ENCODE measurements at regions of chr1 and their contacts with region 1.

Region 1: GRCh38 chr1:76330991-76331603 is 256.6 kb downstream of the ST6GALNAC3 start:
- DNase-seq: peak in 1 of 2 experiments; percentile 50
- H3K4me3 ChIP-seq: no peak overlapping the region
- H3K4me3 Mint-ChIP-seq: no peak overlapping the region
- H3K27ac Mint-ChIP-seq: no peak overlapping the region
- H3K4me1 ChIP-seq: no peaks in the 10 kb centered on the region
- H3K4me1 Mint-ChIP-seq: no peaks in the 10 kb centered on the region
- H3K27me3 ChIP-seq: no peaks in the 10 kb centered on the region
- H3K27me3 Mint-ChIP-seq: no peaks in the 10 kb centered on the region
- CTCF ChIP-seq: peak; percentile 72 to 77

Region 2: DNA sequence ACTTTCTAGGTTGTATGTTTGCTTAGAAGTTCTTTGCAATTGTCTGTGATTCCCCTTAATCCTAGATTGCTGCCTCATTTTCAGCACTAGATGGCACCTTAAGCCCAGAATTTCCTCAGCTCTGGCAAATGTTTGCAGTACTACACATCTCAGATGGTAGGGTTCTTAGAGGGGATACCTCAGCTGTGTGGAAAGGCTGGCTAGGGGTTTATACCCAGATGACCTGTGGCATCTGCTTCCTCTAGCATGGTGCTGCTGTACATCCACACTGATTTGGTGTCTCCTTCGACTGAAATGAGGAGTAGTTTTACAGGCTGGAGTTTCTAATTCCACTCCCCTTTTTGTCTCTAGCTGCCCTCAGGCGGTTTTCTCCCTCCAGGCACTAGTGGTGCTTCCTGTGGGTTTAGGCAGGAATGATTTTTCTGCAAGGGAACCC is 422.4 kb before region 1 on chr1:
- CTCF ChIA-PET with region 1: no interaction called
- POLR2A ChIA-PET with region 1: no interaction called
- intact Hi-C with region 1: loop called (anchors 5 kb)
- DNase-seq: peak; percentile 42 to 53
- H3K4me3 ChIP-seq: no peak overlapping the region
- H3K4me3 Mint-ChIP-seq: no peak overlapping the region
- H3K27ac Mint-ChIP-seq: no peak overlapping the region
- H3K4me1 ChIP-seq: no peaks in the 10 kb centered on the region
- H3K4me1 Mint-ChIP-seq: peaks cover 16% of the 10 kb centered on the region
- H3K27me3 ChIP-seq: no peaks in the 10 kb centered on the region
- H3K27me3 Mint-ChIP-seq: no peaks in the 10 kb centered on the region
- CTCF ChIP-seq: peak; percentile 37 to 46

Region 3: DNA sequence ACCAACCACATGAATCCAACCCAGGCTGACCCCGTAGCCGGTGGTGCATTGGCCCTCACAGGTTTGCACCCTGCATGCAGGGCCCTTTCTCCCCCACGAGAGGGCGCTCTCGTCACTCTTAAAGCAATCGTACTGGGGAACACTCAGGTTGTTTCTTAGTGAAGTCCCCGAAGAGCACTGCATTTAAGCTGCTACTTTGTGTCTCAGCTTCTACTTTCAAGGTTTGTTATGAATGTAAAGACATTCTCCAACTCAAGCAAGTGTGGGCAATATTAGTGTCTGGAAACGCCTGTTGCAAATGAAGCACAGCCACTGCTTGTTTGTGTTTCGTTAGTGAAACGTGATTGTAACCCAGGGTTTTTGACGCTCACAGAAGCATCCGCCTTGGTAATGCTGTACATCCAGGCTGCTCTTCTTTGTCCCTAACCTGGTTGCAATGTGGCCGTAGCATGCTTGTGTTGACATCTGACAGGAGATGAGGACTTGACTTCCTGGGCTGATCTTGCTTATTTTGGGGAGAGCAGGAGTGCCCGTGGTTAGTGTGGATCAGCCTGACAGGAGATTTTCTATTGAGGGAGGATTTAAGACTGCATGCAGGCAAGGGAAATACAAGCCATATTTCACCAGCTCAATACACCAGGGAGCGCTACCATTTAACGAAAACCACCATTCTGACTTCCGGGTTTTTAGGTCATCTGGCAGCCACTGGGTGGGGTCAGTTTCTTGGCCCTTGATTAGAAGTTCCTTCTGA is 176.7 kb before region 1 on chr1:
- CTCF ChIA-PET with region 1: no interaction called
- POLR2A ChIA-PET with region 1: no interaction called
- intact Hi-C with region 1: loop called (anchors 10 kb)
- DNase-seq: peak; percentile 41 to 60
- H3K4me3 ChIP-seq: no peak overlapping the region
- H3K4me3 Mint-ChIP-seq: no peak overlapping the region
- H3K27ac Mint-ChIP-seq: no peak overlapping the region
- H3K4me1 ChIP-seq: no peaks in the 10 kb centered on the region
- H3K4me1 Mint-ChIP-seq: no peaks in the 10 kb centered on the region
- H3K27me3 ChIP-seq: no peaks in the 10 kb centered on the region
- H3K27me3 Mint-ChIP-seq: no peaks in the 10 kb centered on the region
- CTCF ChIP-seq: peak; percentile 73 to 81

Region 4: DNA sequence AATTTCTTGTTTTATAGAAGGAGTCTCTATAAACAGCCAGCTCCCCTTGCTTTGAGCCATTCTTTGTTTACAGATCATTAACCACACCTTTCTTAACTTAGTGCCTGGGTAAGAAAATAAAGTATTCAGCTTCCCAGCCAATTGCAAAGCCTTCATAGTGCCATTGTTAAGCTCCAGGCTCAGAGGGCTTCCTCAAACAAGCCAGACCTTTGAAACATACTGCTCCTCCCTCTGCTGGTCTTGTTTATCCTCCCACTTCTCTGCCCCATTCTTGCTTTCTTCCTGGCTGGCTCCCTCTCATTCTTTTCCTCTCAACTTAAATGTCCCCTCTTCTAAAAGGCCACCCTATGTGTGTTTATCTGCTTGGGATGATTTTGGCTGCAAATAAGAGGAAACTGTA is 216.8 kb after region 1 on chr1:
- CTCF ChIA-PET with region 1: no interaction called
- POLR2A ChIA-PET with region 1: no interaction called
- intact Hi-C with region 1: loop called (anchors 5 kb)
- DNase-seq: peak; percentile 27 to 45
- H3K4me3 ChIP-seq: no peak overlapping the region
- H3K4me3 Mint-ChIP-seq: no peak overlapping the region
- H3K27ac Mint-ChIP-seq: no peak overlapping the region
- H3K4me1 ChIP-seq: no peaks in the 10 kb centered on the region
- H3K4me1 Mint-ChIP-seq: peaks cover 6% of the 10 kb centered on the region
- H3K27me3 ChIP-seq: no peaks in the 10 kb centered on the region
- H3K27me3 Mint-ChIP-seq: no peaks in the 10 kb centered on the region
- CTCF ChIP-seq: no peak

Region 5: GRCh38 chr1:76705560-76705959 is 374.5 kb after region 1 on chr1:
- CTCF ChIA-PET with region 1: no interaction called
- POLR2A ChIA-PET with region 1: no interaction called
- intact Hi-C with region 1: no loop called
- DNase-seq: no peak
- H3K4me3 ChIP-seq: no peak overlapping the region
- H3K4me3 Mint-ChIP-seq: no peak overlapping the region
- H3K27ac Mint-ChIP-seq: no peak overlapping the region
- H3K4me1 ChIP-seq: no peaks in the 10 kb centered on the region
- H3K4me1 Mint-ChIP-seq: no peaks in the 10 kb centered on the region
- H3K27me3 ChIP-seq: no peaks in the 10 kb centered on the region
- H3K27me3 Mint-ChIP-seq: peaks cover 4% of the 10 kb centered on the region
- CTCF ChIP-seq: no peak

Region 6: DNA sequence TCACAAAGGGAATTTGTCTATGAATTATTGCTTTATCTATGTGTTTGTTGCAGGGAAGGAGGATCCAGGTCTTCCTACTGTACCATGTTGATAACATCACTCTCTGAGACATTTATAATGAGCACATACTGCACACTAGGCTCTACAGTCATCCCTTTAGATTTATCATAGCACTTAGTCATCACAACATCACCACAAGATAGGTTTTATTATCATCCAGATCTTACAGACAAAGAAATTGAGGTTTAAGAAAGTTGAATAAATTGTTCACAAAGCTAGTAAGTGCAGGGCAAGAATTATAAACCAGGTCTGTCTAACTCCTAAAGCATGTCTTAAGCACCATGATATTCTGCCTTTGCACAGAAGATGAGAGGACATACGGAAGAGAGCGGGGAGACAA is 415.1 kb after region 1 on chr1:
- CTCF ChIA-PET with region 1: no interaction called
- POLR2A ChIA-PET with region 1: no interaction called
- intact Hi-C with region 1: loop called (anchors 1 kb)
- DNase-seq: no peak
- H3K4me3 ChIP-seq: no peak overlapping the region
- H3K4me3 Mint-ChIP-seq: no peak overlapping the region
- H3K27ac Mint-ChIP-seq: no peak overlapping the region
- H3K4me1 ChIP-seq: no peaks in the 10 kb centered on the region
- H3K4me1 Mint-ChIP-seq: no peaks in the 10 kb centered on the region
- H3K27me3 ChIP-seq: no peaks in the 10 kb centered on the region
- H3K27me3 Mint-ChIP-seq: peaks cover 17% of the 10 kb centered on the region
- CTCF ChIP-seq: no peak

Region 7: DNA sequence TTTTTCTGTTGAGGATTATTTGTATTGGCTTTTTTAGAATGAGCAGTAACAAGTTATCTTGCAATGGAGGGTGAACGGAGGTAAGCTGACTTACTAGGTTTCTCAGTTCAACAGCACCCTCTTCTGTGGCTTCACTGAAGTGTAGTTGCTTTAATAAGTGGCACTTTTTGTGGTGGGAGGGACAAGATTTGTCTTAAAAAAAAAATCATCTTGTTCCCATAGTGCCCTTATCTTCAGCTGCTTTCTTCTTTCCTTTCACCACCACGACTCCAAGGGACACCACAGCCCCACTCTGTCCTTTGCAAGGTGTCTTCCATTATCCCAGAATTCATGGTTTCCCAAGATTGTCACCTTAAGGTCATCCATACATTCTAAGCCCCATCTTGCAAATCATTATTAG is 795.2 kb after region 1 on chr1:
- CTCF ChIA-PET with region 1: no interaction called
- POLR2A ChIA-PET with region 1: no interaction called
- intact Hi-C with region 1: loop called (anchors 5 kb)
- DNase-seq: peak in 1 of 2 experiments; percentile 30
- H3K4me3 ChIP-seq: no peak overlapping the region
- H3K4me3 Mint-ChIP-seq: no peak overlapping the region
- H3K27ac Mint-ChIP-seq: no peak overlapping the region
- H3K4me1 ChIP-seq: no peaks in the 10 kb centered on the region
- H3K4me1 Mint-ChIP-seq: no peaks in the 10 kb centered on the region
- H3K27me3 ChIP-seq: no peaks in the 10 kb centered on the region
- H3K27me3 Mint-ChIP-seq: no peaks in the 10 kb centered on the region
- CTCF ChIP-seq: peak in 1 of 2 experiments; percentile 42

Measured in Caco-2 (cell line).